ENCODE measurements at regions of chr2 and their contacts with region 1.

Region 1: GRCh38 chr2:179264368-179265081 is at the start of gene SESTD1:
- DNase-seq: peak in 41 of 42 donors; percentile 37 to 89 (median 76)

Region 2: DNA sequence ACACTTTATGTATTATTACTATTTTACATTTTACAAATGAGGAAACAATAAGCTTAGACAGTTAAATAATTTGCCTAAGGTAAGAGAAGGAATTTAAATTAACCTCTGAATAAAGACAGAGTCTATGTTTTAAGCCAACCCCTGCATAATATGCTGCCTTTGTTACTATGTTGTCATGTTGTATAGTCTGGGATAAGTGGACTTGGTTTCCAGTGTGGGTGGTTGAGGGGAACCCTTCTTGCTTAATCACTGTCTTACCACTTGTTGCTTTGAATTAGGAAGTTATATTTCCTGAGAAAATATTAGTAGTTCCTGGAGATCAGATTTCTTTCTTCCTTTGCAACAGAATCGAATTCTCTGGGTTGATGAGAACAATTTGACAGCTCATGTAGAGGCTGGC is 1819.3 kb before region 1 on chr2:
- intact Hi-C with region 1: no loop called
- DNase-seq: no peak

Region 3: DNA sequence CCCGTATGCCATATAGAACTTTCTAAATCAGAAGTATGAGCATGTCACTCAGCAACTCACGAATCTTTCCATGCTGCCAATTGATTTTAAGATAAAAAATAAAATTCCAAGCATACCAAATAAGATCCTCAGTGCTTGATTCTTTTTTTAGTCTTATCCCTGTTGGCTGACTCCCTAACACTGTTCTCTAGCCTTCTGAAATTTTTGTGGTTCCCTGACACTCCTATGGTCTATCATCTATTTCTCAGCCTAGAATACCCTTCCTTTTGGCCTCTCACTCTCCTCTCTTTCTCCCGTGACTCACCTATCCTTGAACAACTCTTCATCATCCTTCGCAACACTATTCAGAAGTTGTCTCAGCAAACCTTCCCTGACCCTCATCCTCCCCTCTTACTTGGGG is 265.0 kb before region 1 on chr2:
- intact Hi-C with region 1: no loop called
- DNase-seq: no peak

Region 4: GRCh38 chr2:179336818-179337534 is 72.5 kb after region 1 on chr2:
- intact Hi-C with region 1: loop called (anchors 10 kb)
- DNase-seq: peak in 11 of 42 donors; percentile 9 to 47 (median 26)